AG04450 (cell line): ENCODE measurements at regions of chr10 and their contacts with region 1.

Region 1: DNA sequence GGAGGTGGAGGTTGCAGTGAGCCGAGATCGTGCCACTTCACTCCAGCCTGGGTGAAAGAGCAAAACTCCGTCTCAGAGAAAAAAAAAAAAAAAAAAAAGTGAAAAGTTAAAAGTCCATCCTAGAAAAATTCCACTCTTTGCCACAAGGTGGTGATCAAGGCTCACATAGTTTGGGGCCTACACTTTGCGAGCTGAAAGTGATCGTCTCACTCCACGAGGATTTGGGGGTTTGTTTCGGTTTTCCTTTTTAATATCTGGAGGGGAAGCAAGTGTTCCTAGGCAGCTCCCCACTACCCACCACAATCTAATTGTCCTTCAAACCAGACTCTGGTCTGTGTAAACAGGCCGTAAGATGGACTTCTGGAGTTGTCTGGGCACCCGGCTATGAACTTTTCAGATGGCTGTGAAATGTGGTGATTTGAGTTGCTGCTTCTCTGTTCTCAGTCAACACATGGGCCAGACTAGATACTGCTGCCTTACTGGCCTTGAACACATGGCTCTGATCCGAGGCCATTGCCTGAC is 27.1 kb downstream of the PRLHR start:
- DNase-seq: peak; percentile 10
- H3K4me3 ChIP-seq: peak overlapping the region; percentile 35
- H3K27ac ChIP-seq: no peak overlapping the region
- H3K27me3 ChIP-seq: peaks cover 17% of the 10 kb centered on the region
- CTCF ChIP-seq: peak; percentile 80

Region 2: DNA sequence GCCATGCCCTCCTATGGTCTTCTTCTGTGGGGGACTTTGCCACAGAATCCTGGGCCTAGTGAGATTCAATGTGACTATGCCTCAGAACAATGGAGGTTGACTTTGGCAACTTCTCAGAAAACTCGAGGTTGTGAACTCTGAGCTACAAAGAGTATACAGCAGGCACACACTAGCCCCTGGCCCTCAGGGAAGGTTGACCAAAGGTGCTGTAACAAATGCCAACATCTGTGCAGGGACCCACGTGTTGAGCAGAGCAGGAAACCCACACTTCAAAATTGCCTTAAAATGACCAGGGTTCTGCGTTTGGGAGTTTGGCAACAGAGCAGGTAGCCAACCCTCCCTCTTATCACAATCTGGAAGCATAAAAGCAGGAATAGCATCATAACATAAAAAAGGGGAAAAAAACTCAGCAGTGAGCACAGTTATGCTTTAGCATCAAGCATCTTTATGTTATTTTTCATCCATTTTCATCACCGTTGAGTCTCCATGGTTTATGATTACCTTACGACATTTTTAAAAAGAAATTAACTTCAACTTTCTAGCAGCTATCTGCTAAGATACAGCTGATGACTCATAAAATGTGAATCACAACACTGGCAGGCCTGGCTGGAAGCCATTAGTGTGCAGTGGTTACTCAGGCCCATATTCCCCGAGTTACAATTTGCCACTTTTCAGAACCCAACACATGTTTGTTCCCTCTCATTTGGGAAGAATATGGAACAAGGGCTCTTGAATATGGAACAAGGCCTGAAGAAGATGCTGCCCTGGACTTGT is 16.0 kb after region 1 on chr10:
- CTCF ChIA-PET with region 1: interaction called, 27 read pairs
- POLR2A ChIA-PET with region 1: no interaction called
- DNase-seq: peak; percentile 7
- H3K4me3 ChIP-seq: no peak overlapping the region
- H3K27ac ChIP-seq: no peak overlapping the region
- H3K27me3 ChIP-seq: no peaks in the 10 kb centered on the region
- CTCF ChIP-seq: no peak

Region 3: GRCh38 chr10:118692872-118693271 is 124.5 kb after region 1 on chr10:
- CTCF ChIA-PET with region 1: interaction called, 21 read pairs
- POLR2A ChIA-PET with region 1: no interaction called
- DNase-seq: peak; percentile 70
- H3K4me3 ChIP-seq: no peak overlapping the region
- H3K27ac ChIP-seq: peak overlapping the region; percentile 58
- H3K27me3 ChIP-seq: no peaks in the 10 kb centered on the region
- CTCF ChIP-seq: no peak

Region 4: GRCh38 chr10:118712930-118713634 is 144.7 kb after region 1 on chr10:
- CTCF ChIA-PET with region 1: interaction called, 175 read pairs
- POLR2A ChIA-PET with region 1: no interaction called
- DNase-seq: no peak
- H3K4me3 ChIP-seq: no peak overlapping the region
- H3K27ac ChIP-seq: no peak overlapping the region
- H3K27me3 ChIP-seq: no peaks in the 10 kb centered on the region
- CTCF ChIP-seq: 0 out of 2 replicates have a peak, but pooled peaks have one; percentile 15

Region 5: GRCh38 chr10:118732245-118733165 is 164.1 kb after region 1 on chr10:
- CTCF ChIA-PET with region 1: interaction called, 22 read pairs
- POLR2A ChIA-PET with region 1: no interaction called
- DNase-seq: no peak
- H3K4me3 ChIP-seq: no peak overlapping the region
- H3K27ac ChIP-seq: no peak overlapping the region
- H3K27me3 ChIP-seq: no peaks in the 10 kb centered on the region
- CTCF ChIP-seq: no peak

Region 6: GRCh38 chr10:118800920-118801319 is 232.5 kb after region 1 on chr10:
- CTCF ChIA-PET with region 1: interaction called, 13 read pairs
- POLR2A ChIA-PET with region 1: no interaction called
- DNase-seq: no peak
- H3K4me3 ChIP-seq: no peak overlapping the region
- H3K27ac ChIP-seq: no peak overlapping the region
- H3K27me3 ChIP-seq: peaks cover 2% of the 10 kb centered on the region
- CTCF ChIP-seq: peak; percentile 21; the same call in 1 of the 2 replicates

Region 7: GRCh38 chr10:119041326-119041725 is 472.9 kb after region 1 on chr10:
- CTCF ChIA-PET with region 1: interaction called, 12 read pairs
- POLR2A ChIA-PET with region 1: no interaction called
- DNase-seq: no peak
- H3K4me3 ChIP-seq: no peak overlapping the region
- H3K27ac ChIP-seq: no peak overlapping the region
- H3K27me3 ChIP-seq: no peaks in the 10 kb centered on the region
- CTCF ChIP-seq: no peak